ENCODE measurements at regions of chr5 and their contacts with region 1.

Region 1: GRCh38 chr5:14727428-14727865 is 62.9 kb downstream of the OTULIN start:
- DNase-seq: no peak
- H3K4me3 ChIP-seq: no peak overlapping the region
- CTCF ChIP-seq: peak; percentile 81

Region 2: DNA sequence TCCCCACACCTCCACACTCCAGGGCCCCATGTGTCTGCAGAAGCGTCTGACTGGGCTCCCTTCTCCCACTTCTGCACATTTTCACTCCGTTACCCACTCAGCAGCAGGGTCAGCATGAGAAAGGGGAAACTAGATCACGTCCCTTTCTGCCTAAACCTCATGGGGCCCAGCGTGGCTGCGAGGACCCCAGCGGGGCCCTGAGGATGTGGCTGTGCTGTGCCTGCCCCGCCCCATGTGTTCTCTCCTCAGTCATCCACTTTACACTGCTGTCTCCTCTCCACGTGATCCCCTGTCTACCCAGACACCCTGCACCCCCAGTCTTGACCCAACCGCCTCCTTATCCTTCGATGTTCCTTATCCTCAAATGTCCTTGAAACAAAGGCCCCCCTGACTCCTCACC is 205.7 kb before region 1 on chr5:
- CTCF ChIA-PET with region 1: no interaction called
- POLR2A ChIA-PET with region 1: no interaction called
- DNase-seq: no peak
- H3K4me3 ChIP-seq: no peak overlapping the region
- CTCF ChIP-seq: no peak

Region 3: DNA sequence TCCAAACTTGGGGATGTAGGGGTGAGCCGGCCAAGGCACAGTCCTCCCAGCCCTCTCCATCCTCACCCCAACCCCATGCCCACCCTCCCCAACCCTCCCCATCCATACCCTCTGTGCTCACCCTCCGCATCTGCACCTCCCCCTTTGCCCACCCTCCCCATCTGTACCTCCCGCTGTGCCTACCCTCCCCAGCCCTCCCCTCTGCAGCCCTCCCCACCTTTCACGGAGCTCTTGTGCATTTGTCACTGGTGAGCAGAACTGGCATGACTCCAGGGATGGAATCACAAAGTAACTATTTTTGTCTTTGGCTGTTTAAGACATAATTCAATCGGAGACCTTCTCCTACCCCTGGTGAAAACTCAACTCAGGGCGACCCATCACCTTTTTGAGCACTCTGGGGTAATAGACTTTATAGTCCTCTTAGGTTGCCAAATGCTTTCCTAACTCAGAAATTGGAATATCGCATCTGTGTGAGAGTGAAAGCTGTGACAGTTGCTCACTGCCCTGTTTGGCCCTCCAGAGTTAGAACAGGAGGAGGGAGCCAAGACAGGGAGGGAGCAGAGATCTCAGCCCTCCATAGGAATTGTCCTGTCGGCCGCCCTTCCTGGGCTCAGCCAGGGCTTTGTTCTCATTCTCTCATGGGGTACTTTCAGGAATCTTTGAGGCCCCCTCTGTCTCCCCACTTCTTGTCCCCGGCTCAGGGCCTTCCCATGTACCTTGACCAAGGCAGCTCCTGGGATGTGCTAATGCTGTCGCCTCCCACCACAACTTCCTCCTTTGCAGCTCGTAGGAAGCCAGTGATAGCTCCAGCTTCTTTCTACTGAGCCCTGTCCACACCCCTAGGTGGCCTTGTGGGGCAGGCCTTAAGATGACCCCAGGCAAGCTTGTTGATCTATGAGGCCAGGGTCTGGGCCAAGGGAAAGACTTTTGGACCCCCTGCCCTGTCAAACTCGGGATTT is 26.7 kb before region 1 on chr5:
- CTCF ChIA-PET with region 1: interaction called, 58 read pairs
- POLR2A ChIA-PET with region 1: no interaction called
- DNase-seq: no peak
- H3K4me3 ChIP-seq: no peak overlapping the region
- CTCF ChIP-seq: no peak

Region 4: DNA sequence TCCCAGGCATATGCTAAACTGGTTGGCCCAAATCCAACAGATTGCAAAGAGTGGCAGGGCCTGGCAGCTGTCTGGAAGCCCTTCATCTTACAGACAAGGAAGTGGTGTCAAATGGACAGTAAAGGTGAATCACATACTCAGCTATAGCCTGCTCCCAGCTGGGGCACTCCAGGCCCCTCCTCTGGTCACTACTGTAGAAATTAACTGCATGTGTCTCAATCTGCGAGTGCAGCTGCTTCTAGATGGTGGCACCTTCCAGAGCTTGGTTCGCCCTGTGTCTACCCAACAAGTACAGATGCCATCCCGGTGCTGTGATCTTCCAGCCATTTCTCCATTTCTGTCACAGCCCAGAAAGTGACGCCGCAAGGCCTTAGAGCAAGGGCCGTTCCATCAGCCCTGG is 12.7 kb before region 1 on chr5:
- CTCF ChIA-PET with region 1: interaction called, 58 read pairs
- POLR2A ChIA-PET with region 1: no interaction called
- DNase-seq: no peak
- H3K4me3 ChIP-seq: no peak overlapping the region
- CTCF ChIP-seq: no peak

Region 5: GRCh38 chr5:14745753-14746152 is 18.3 kb after region 1 on chr5:
- CTCF ChIA-PET with region 1: interaction called, 25 read pairs
- POLR2A ChIA-PET with region 1: no interaction called
- DNase-seq: no peak
- H3K4me3 ChIP-seq: no peak overlapping the region
- CTCF ChIP-seq: no peak

Region 6: GRCh38 chr5:14871210-14872069 is 144.0 kb after region 1 on chr5 and contains the start of gene ANKH:
- CTCF ChIA-PET with region 1: interaction called, 46 read pairs
- POLR2A ChIA-PET with region 1: interaction called, 3 read pairs
- DNase-seq: no peak
- H3K4me3 ChIP-seq: peak within 1 kb of the TSS; percentile 74
- CTCF ChIP-seq: peak; percentile 47

Region 7: DNA sequence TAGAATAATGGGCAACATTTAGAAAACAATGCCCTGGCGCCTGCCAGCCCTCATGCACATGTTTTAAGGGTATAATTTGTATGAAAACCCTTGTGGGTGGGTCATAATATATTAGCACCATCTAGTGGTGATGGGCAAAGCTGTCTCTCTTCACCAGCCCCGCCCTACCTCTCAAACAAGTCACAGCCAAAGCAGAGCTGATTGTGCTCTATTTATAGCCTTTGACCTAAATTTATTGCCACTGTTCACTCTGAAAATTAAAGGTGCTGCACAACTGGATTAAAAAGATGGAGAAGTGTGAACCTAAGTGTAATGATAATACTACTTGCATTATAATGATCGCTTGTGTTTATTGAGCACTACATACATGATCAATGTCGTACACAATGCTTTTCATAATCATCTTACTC is 276.1 kb after region 1 on chr5:
- CTCF ChIA-PET with region 1: interaction called, 332 read pairs
- POLR2A ChIA-PET with region 1: no interaction called
- DNase-seq: no peak
- H3K4me3 ChIP-seq: no peak overlapping the region
- CTCF ChIP-seq: peak; percentile 70

Region 8: DNA sequence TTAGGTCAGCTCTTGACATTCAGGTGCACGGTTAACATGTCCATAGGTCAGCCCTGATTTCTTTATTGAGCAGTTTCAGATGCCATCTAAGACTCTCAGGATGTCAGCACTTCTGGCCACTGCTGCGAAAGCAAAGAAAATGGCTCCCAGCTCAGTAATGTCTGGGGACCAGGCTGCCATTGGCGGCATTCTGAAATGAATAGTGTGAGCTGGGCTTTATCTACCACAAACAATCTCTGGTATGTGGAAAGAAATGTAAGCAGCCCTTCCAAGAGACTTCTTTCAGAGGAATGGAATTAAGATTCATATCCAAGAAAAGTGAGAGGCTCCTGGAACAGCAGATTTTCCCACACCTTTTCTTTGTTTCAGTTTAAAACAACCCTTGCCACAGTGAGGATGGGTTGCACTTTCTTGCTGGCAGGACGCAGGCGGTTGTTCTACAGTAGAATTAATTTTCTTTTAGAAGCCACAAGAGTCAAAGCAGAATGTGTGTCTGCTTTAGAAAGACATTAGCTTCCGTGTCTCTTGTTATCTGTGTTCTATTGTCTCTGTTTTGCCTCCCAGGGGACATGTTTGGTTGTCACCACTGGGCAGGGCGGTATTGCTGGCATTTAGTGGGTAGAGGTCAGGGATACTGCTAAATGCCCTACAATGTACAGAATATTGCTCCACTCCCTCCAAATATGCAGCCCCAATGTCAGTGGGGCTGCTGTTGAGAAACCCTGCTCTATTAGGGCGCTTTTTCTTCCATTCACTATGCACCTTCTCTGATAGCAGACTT is 294.0 kb after region 1 on chr5:
- CTCF ChIA-PET with region 1: interaction called, 94 read pairs
- POLR2A ChIA-PET with region 1: no interaction called
- DNase-seq: peak; percentile 67
- H3K4me3 ChIP-seq: no peak overlapping the region
- CTCF ChIP-seq: no peak